PC-9 (cell line): ENCODE measurements at regions of chr1 and their contacts with region 1.

Region 1: DNA sequence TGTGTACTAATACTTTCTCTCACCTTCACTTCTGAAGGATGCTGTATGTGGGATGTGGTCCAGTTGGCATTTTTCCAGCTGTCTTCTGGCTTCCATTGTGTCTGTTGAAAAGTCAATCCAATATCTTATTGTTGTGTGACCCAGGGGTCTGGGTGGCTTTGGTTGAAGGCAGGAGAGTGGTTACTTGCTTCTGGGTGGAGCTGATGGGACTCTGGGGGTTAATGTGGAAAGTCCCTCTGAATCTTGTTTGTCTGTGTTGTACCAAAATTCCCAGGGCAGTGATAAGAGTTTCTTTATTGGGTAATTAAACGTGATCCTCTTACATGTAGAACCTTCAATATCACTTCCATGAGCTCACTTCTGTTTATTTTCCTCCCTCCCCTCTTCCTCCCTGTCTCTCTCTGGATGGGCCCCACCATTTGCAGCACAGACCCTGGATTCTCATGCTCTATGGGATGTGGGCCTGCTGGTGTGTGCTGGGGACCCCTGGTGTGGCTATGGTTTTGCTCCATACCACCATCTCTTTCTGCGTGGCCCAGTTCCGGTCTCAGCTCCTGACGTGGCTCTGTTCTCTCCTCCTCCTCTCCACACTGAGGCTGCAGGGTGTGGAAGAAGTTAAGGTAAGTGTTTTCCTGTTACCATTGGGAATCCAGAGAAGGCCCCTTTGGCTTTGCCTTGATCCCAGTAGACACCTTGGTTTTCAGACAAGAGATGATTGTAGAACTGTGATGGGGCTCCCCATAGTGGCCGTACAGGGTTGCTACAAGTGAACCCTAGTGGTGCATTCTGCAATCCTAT is 71.5 kb downstream of the HHAT start:
- DNase-seq: peak; percentile 52 to 65
- H3K4me3 ChIP-seq: no peak overlapping the region
- H3K27ac ChIP-seq: no peak overlapping the region
- H3K4me1 ChIP-seq: no peaks in the 10 kb centered on the region
- H3K27me3 ChIP-seq: no peaks in the 10 kb centered on the region
- CTCF ChIP-seq: peak; percentile 83

Region 2: DNA sequence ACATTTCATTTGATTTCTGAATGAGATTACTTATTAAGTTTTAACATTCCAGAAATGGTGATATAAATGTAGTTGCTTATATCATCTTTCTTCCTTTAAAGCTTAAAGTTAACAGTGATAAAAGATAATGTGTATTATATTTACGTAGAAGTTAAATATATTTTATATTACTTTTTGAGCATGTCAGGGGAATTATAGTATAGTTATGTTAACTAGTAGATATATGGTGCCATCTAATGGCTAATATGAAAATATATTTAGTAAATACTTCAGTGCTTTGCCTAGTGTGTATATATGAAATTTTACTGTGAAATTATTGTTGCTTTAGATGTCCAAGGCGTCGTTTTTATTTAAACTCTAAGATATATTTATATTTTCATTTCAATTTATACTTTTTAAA is 410.7 kb before region 1 on chr1:
- CTCF ChIA-PET with region 1: no interaction called
- POLR2A ChIA-PET with region 1: no interaction called
- intact Hi-C with region 1: loop called (anchors 10 kb)
- DNase-seq: no peak
- H3K4me3 ChIP-seq: no peak overlapping the region
- H3K27ac ChIP-seq: peak overlapping the region; percentile 63
- H3K4me1 ChIP-seq: peaks cover 15% of the 10 kb centered on the region
- H3K27me3 ChIP-seq: no peaks in the 10 kb centered on the region
- CTCF ChIP-seq: peak; percentile 69; the same call in 1 of the 2 replicates

Region 3: DNA sequence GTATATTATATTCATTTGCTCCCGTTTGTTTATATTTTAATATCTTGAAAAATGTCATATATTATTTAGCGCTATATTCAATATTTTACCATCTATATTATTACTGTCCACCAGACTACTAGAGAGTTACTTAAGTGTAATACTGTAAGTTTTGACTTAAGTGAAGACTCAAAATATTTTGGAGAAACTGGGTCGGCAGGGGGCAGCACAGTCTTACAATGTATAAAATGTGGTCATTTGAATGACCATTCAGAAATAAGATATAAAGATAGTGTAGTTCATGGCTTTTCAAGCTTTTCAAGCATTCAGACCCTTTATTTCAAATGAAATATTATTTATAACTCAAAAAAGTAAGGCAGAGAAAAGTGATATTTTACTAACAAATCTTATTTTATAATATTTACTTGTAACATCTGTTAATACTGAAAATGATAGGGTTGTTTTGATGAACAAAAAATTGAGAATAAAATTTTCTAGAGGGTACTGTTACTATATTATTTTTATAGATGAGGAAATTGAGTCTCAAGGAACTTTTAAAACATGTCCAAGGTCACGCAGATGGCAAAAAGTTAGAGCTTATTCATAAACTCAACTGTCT is 256.7 kb before region 1 on chr1:
- CTCF ChIA-PET with region 1: no interaction called
- POLR2A ChIA-PET with region 1: no interaction called
- intact Hi-C with region 1: loop called (anchors 1 kb)
- DNase-seq: peak; percentile 41 to 74
- H3K4me3 ChIP-seq: no peak overlapping the region
- H3K27ac ChIP-seq: no peak overlapping the region
- H3K4me1 ChIP-seq: no peaks in the 10 kb centered on the region; the same call in 1 of the 2 replicates
- H3K27me3 ChIP-seq: no peaks in the 10 kb centered on the region
- CTCF ChIP-seq: peak; percentile 91

Region 4: GRCh38 chr1:210360852-210361477 is 39.3 kb before region 1 on chr1:
- CTCF ChIA-PET with region 1: interaction called, 5 read pairs
- POLR2A ChIA-PET with region 1: no interaction called
- intact Hi-C with region 1: loop called (anchors 1 kb)
- DNase-seq: no peak
- H3K4me3 ChIP-seq: no peak overlapping the region
- H3K27ac ChIP-seq: no peak overlapping the region
- H3K4me1 ChIP-seq: peaks cover under 1% of the 10 kb centered on the region; the same call in 1 of the 2 replicates
- H3K27me3 ChIP-seq: no peaks in the 10 kb centered on the region
- CTCF ChIP-seq: peak; percentile 72

Region 5: GRCh38 chr1:210415846-210416448 is 15.7 kb after region 1 on chr1:
- CTCF ChIA-PET with region 1: no interaction called
- POLR2A ChIA-PET with region 1: no interaction called
- intact Hi-C with region 1: no loop called
- DNase-seq: no peak
- H3K4me3 ChIP-seq: no peak overlapping the region
- H3K27ac ChIP-seq: no peak overlapping the region
- H3K4me1 ChIP-seq: no peaks in the 10 kb centered on the region
- H3K27me3 ChIP-seq: no peaks in the 10 kb centered on the region
- CTCF ChIP-seq: no peak